Prostate gland (tissue), 2 donors: ENCODE measurements at regions of chrX and their contacts with region 1.

Region 1: DNA sequence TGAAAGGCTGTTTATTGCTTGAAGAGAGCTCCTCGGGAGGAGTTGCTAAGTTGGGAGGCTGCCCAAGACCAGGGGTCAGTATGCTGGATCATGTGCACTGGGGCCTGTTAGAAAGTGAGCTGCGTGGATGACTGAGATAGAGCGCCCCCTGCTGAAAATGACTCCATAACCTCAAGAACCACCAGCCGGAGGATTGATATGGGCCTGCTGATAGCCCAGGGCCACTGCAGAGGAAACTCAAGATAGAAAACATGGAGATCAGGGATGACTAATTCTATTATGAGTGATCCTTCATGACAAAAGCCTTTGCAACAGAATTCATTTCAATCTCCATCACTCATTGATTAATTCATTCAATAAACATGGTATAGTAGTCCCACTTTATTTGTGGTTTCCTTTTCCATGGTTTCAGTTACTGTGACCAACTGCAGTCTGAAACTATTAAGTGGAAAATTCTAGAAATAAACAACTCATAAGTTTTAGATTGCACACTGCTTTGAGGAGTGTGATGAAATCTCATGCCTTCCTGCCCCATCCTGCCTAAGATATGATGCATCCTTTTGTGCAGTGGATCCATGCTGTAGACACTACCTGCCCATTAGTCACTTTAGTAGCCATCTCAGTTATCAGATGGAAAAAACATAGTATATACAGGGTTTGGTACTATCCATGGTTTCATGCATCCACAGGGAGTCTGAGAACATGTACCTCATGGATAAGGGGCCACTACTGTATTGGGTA is 126.7 kb upstream of the MBNL3 start:
- DNase-seq: peak; percentile 4
- H3K4me3 ChIP-seq: no peak overlapping the region
- H3K27ac ChIP-seq: no peak overlapping the region
- H3K4me1 ChIP-seq: no peaks in the 10 kb centered on the region
- H3K27me3 ChIP-seq: no peaks in the 10 kb centered on the region
- CTCF ChIP-seq: peak in 2 of 4 experiments; percentile 8 to 38
- POLR2A ChIP-seq: no peak

Region 2: DNA sequence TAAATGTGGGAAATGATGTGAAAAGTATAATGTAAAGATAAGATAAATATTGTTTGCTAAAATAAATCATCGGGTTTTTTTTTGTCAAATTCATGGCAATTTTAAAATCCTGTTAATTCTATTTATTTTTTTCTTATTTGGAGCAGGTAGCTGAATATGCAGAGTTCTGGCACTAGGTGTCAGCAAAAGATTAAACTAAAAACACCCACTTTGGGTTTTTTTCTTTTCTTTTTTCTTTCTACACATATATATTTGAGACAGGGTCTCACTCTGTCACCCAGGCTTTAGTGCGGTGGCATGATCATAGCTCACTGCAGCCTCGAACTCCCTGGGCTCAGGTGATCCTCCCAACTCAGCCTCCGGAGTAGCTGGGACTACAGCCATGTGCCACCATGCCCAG is 389.4 kb before region 1 on chrX:
- intact Hi-C with region 1: loop called (anchors 10 kb)
- DNase-seq: no peak
- H3K4me3 ChIP-seq: no peak overlapping the region
- H3K27ac ChIP-seq: no peak overlapping the region
- H3K4me1 ChIP-seq: no peaks in the 10 kb centered on the region
- H3K27me3 ChIP-seq: no peaks in the 10 kb centered on the region
- CTCF ChIP-seq: peak in 1 of 4 experiments; percentile 22
- POLR2A ChIP-seq: no peak

Region 3: GRCh38 chrX:132292793-132293192 is 322.8 kb before region 1 on chrX:
- intact Hi-C with region 1: loop called (anchors 10 kb)
- DNase-seq: peak; percentile 6
- H3K4me3 ChIP-seq: no peak overlapping the region
- H3K27ac ChIP-seq: no peak overlapping the region
- H3K4me1 ChIP-seq: no peaks in the 10 kb centered on the region
- H3K27me3 ChIP-seq: no peaks in the 10 kb centered on the region
- CTCF ChIP-seq: peak in 3 of 4 experiments; percentile 55 to 57 (median 55)
- POLR2A ChIP-seq: no peak

Region 4: DNA sequence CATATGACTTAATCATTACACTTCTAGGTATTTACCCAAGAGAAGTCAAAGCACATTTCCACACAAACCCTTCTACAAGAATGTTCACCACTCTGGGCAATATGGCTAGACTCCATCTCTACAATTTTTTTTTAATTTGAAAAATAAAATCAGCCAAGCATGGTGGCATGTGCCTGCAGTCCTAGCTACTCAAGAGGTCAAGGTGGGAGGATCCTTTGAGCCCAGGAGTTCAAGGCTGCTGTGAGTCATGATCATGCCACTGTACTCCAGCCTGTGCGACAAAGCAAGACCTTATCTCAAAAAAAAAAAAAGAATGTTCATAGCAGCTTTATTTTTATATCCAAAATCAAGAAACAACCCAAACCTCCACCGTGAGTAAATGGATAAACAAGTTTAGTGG is 56.5 kb before region 1 on chrX:
- intact Hi-C with region 1: no loop called
- DNase-seq: no peak
- H3K4me3 ChIP-seq: no peak overlapping the region
- H3K27ac ChIP-seq: no peak overlapping the region
- H3K4me1 ChIP-seq: no peaks in the 10 kb centered on the region
- H3K27me3 ChIP-seq: no peaks in the 10 kb centered on the region
- CTCF ChIP-seq: no peak
- POLR2A ChIP-seq: no peak